Activated CD8-positive, alpha-beta memory T cell treated with anti-CD3 and anti-CD28 coated beads, Interleukin-2, amount 10 ng/mL, durations not matched to agents 7 days and 5 days (primary cell): ENCODE measurements at regions of chr3 and their contacts with region 1.

Region 1: GRCh38 chr3:127791211-127791946 is 30.9 kb downstream of the MGLL start:
- DNase-seq: peak; percentile 66
- ATAC-seq: peak; percentile 88
- H3K4me3 Mint-ChIP-seq: no peak overlapping the region
- H3K27ac Mint-ChIP-seq: peak overlapping the region; percentile 33
- H3K4me1 Mint-ChIP-seq: peaks cover 11% of the 10 kb centered on the region
- H3K27me3 Mint-ChIP-seq: peaks cover 11% of the 10 kb centered on the region

Region 2: GRCh38 chr3:127822698-127823425 is 31.5 kb after region 1 on chr3:
- CTCF ChIA-PET with region 1: interaction called, 39 read pairs
- DNase-seq: peak; percentile 53
- ATAC-seq: peak; percentile 75
- H3K4me3 Mint-ChIP-seq: peak overlapping the region; percentile 84
- H3K27ac Mint-ChIP-seq: peak overlapping the region; percentile 79
- H3K4me1 Mint-ChIP-seq: peaks cover 39% of the 10 kb centered on the region
- H3K27me3 Mint-ChIP-seq: peaks cover 51% of the 10 kb centered on the region

Region 3: GRCh38 chr3:127857333-127857732 is 66.0 kb after region 1 on chr3:
- CTCF ChIA-PET with region 1: no interaction called
- DNase-seq: no peak
- ATAC-seq: no peak
- H3K4me3 Mint-ChIP-seq: no peak overlapping the region
- H3K27ac Mint-ChIP-seq: no peak overlapping the region
- H3K4me1 Mint-ChIP-seq: peaks cover 7% of the 10 kb centered on the region
- H3K27me3 Mint-ChIP-seq: peaks cover 10% of the 10 kb centered on the region